CD4-positive, alpha-beta T cell (primary cell): ENCODE measurements at regions of chr12 and their contacts with region 1.

Region 1: GRCh38 chr12:133080368-133081158 is at the start of gene ZNF140:
- DNase-seq: peak; percentile 86 to 98 (median 92)
- ATAC-seq: peak; percentile 54
- H3K4me3 ChIP-seq: peak within 1 kb of the TSS; percentile 82
- H3K4me3 Mint-ChIP-seq: peak within 1 kb of the TSS; percentile 74
- H3K27ac ChIP-seq: peak within 1 kb of the TSS; percentile 98 to 99
- H3K27ac Mint-ChIP-seq: no peak within 1 kb of the TSS
- H3K4me1 ChIP-seq: peaks cover 23% of the 10 kb centered on the region
- H3K4me1 Mint-ChIP-seq: peaks cover 16% of the 10 kb centered on the region
- H3K27me3 ChIP-seq: no peaks in the 10 kb centered on the region
- H3K27me3 Mint-ChIP-seq: no peaks in the 10 kb centered on the region
- CTCF ChIP-seq: peak; percentile 43
- total RNA-seq, gene ZNF140: 6.6 to 8.5 TPM

Region 2: DNA sequence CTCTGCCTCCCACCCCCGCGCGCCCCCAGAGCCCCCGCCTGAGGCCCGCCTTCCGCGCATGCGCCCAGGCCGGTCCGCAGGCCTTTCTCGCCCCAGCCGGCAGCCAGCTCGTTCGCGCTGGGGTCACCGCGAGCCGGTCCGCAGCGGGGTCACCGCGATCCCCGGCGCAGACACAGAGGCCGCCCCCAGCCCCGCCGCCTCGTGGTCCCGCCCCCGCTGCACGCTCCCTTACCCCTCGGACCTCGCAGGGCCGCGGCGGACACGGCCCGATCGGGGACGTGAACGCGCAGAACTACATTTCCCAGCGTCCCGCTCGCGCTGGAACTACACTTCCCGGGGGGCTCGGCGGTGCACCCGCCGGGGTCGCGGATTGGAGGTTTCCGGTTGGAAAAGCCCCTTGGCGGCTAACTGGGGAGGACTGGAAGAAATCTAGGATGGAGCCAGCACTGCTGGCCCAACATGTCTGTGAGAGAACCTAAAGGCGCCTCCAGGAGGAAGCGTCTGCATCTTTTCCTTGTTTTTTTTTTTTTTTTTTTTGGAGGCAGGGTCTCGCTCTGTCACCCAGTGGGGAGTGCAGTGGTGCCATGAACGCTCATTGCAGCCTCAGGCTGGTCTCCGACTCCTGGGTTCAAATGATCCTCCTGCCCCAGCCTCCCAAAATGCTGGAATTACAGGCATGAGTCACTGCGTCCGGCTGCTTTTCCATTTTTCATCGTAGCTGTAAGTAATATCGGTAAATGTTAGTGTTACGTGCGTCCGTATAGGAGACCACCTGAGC is 124.4 kb before region 1 on chr12 and contains the start of gene ZNF605:
- CTCF ChIA-PET with region 1: no interaction called
- POLR2A ChIA-PET with region 1: no interaction called
- intact Hi-C with region 1: loop called in 1 of 2 experiments (anchors 1 kb)
- DNase-seq: peak; percentile 63 to 94 (median 79)
- ATAC-seq: peak; percentile 95
- H3K4me3 ChIP-seq: peak within 1 kb of the TSS; percentile 78
- H3K4me3 Mint-ChIP-seq: peak within 1 kb of the TSS; percentile 98
- H3K27ac ChIP-seq: peak within 1 kb of the TSS; percentile 33 to 64
- H3K27ac Mint-ChIP-seq: peak within 1 kb of the TSS; percentile 89
- H3K4me1 ChIP-seq: peaks cover 23% of the 10 kb centered on the region
- H3K4me1 Mint-ChIP-seq: peaks cover 29% of the 10 kb centered on the region
- H3K27me3 ChIP-seq: no peaks in the 10 kb centered on the region
- H3K27me3 Mint-ChIP-seq: no peaks in the 10 kb centered on the region
- CTCF ChIP-seq: no peak
- total RNA-seq, gene ZNF605: 5.3 to 5.8 TPM

Region 3: GRCh38 chr12:133130038-133130807 is 49.7 kb after region 1 on chr12 and contains the starts of genes ZNF10 and ZNF891:
- CTCF ChIA-PET with region 1: interaction called, 4 read pairs
- POLR2A ChIA-PET with region 1: interaction called, 27 read pairs
- intact Hi-C with region 1: loop called (anchors 1 kb)
- DNase-seq: peak; percentile 95 to 99 (median 96)
- ATAC-seq: peak; percentile 85
- H3K4me3 ChIP-seq: peak within 1 kb of the TSS; percentile 78
- H3K4me3 Mint-ChIP-seq: peak within 1 kb of the TSS; percentile 94
- H3K27ac ChIP-seq: peak within 1 kb of the TSS; percentile 97 to 99
- H3K27ac Mint-ChIP-seq: peak within 1 kb of the TSS; percentile 99
- H3K4me1 ChIP-seq: peaks cover 16% of the 10 kb centered on the region
- H3K4me1 Mint-ChIP-seq: peaks cover 30% of the 10 kb centered on the region
- H3K27me3 ChIP-seq: no peaks in the 10 kb centered on the region
- H3K27me3 Mint-ChIP-seq: no peaks in the 10 kb centered on the region
- CTCF ChIP-seq: no peak
- total RNA-seq, gene ZNF10: 43.3 to 47.8 TPM
- total RNA-seq, gene ZNF891: 4.5 TPM

Region 4: DNA sequence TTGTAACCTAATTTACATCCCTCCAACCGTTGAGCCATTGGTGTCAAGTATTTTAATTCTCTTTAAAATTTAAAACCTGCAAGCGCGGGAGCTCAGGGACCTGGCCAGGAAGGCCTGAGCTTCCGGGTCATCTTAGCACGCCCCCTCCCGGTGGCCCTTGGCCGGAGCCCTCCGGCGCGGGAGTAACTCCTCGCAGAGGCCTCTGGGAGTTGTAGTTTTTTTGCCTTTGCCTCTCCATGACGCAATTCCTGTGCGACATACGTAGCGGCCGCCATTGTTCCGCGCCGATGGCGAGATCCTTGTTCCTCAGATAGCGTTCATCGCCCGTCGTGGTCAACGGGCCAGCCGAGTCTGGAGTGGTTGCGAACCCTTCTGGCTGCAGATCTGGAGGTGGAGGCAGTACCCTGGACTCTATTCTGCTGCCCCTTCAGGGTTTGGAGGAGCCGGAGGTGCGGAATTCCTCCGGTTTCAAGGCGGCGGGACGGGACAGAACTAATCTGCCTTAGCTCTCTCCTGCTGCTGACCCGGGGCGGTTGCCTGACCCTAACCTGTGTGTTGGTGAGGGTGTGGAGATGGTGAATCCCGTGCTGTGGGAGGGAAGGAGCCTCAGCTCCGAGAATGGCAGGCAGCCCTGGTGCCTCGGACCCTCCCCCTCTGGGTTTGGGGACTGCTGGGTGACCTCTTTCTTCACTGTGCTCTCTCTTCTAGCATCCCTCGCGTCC is 100.8 kb after region 1 on chr12 and contains the start of gene ZNF268:
- CTCF ChIA-PET with region 1: interaction called, 6 read pairs
- POLR2A ChIA-PET with region 1: interaction called, 37 read pairs
- intact Hi-C with region 1: loop called (anchors 1 kb)
- DNase-seq: peak; percentile 77 to 93 (median 82)
- ATAC-seq: peak; percentile 89
- H3K4me3 ChIP-seq: peak within 1 kb of the TSS; percentile 75
- H3K4me3 Mint-ChIP-seq: peak within 1 kb of the TSS; percentile 96
- H3K27ac ChIP-seq: peak within 1 kb of the TSS; percentile 65 to 73
- H3K27ac Mint-ChIP-seq: peak within 1 kb of the TSS; percentile 90
- H3K4me1 ChIP-seq: peaks cover 14% of the 10 kb centered on the region
- H3K4me1 Mint-ChIP-seq: peaks cover 38% of the 10 kb centered on the region
- H3K27me3 ChIP-seq: no peaks in the 10 kb centered on the region
- H3K27me3 Mint-ChIP-seq: no peaks in the 10 kb centered on the region
- CTCF ChIP-seq: peak; percentile 59
- total RNA-seq, gene ZNF268: 15.1 to 17.6 TPM